ENCODE measurements at regions of chr12 and their contacts with region 1.

Region 1: GRCh38 chr12:113030875-113031525 is 25.5 kb upstream of the DTX1 start:
- DNase-seq: no peak
- ATAC-seq: peak; percentile 47
- H3K4me3 Mint-ChIP-seq: no peak overlapping the region
- H3K27ac Mint-ChIP-seq: no peak overlapping the region
- H3K4me1 Mint-ChIP-seq: peaks cover 7% of the 10 kb centered on the region
- H3K27me3 Mint-ChIP-seq: peaks cover 5% of the 10 kb centered on the region
- CTCF ChIP-seq: peak; percentile 74

Region 2: GRCh38 chr12:112725391-112725790 is 305.6 kb before region 1 on chr12:
- CTCF ChIA-PET with region 1: no interaction called
- POLR2A ChIA-PET with region 1: no interaction called
- intact Hi-C with region 1: no loop called
- DNase-seq: no peak
- ATAC-seq: no peak
- H3K4me3 Mint-ChIP-seq: no peak overlapping the region
- H3K27ac Mint-ChIP-seq: no peak overlapping the region
- H3K4me1 Mint-ChIP-seq: no peaks in the 10 kb centered on the region
- H3K27me3 Mint-ChIP-seq: peaks cover 18% of the 10 kb centered on the region
- CTCF ChIP-seq: no peak

Region 3: GRCh38 chr12:112900299-112901145 is 130.5 kb before region 1 on chr12:
- CTCF ChIA-PET with region 1: interaction called, 35 read pairs
- POLR2A ChIA-PET with region 1: interaction called, 3 read pairs
- intact Hi-C with region 1: loop called (anchors 1 kb)
- DNase-seq: no peak
- ATAC-seq: peak; percentile 45
- H3K4me3 Mint-ChIP-seq: no peak overlapping the region
- H3K27ac Mint-ChIP-seq: no peak overlapping the region
- H3K4me1 Mint-ChIP-seq: peaks cover 42% of the 10 kb centered on the region
- H3K27me3 Mint-ChIP-seq: peaks cover 2% of the 10 kb centered on the region
- CTCF ChIP-seq: peak; percentile 73

Region 4: DNA sequence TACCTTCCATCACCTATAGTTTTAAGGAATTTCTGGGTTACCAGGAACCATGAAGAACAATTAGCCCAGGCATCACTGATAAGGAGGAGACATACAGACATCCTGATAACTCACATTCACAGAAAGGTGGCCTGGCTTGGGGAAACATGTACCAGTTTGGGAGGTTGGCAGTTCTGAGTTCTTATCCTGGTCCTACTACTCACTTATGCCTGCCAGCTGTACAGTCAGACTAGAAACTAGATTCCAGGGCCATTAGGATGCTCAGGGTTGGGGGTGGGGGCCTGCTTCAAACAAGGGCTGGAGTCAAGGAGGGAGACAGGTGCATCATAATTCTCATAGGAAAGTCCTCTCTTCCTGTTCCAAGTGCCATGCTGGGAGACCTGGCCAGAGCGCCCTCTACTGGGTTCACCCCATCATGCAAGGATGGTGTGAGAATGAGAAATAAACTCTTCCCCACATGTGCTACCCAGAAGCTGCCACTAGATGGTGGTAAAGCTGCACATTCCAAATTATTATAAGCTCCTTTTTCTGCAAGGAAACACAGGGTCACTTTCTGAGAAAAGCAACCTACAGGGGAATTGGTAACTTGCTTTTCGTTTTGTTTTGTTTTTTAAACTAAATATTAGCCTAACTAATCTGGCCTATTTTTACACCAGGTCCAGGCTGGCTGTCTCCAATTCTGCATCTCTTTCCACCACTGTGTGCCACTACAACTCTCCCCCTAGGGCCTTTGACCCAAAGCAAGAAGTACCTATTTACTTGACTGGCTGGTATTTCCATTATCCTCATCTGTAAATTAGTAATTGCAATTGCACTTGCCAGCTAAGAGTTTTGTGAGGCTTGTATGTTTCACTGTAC is 38.2 kb before region 1 on chr12:
- CTCF ChIA-PET with region 1: interaction called, 31 read pairs
- POLR2A ChIA-PET with region 1: no interaction called
- intact Hi-C with region 1: loop called (anchors 1 kb)
- DNase-seq: no peak
- ATAC-seq: peak; percentile 72
- H3K4me3 Mint-ChIP-seq: no peak overlapping the region
- H3K27ac Mint-ChIP-seq: peak overlapping the region; percentile 59
- H3K4me1 Mint-ChIP-seq: peaks cover 29% of the 10 kb centered on the region
- H3K27me3 Mint-ChIP-seq: no peaks in the 10 kb centered on the region
- CTCF ChIP-seq: peak; percentile 34